ENCODE measurements at regions of chr9 and their contacts with region 1.

Region 1: DNA sequence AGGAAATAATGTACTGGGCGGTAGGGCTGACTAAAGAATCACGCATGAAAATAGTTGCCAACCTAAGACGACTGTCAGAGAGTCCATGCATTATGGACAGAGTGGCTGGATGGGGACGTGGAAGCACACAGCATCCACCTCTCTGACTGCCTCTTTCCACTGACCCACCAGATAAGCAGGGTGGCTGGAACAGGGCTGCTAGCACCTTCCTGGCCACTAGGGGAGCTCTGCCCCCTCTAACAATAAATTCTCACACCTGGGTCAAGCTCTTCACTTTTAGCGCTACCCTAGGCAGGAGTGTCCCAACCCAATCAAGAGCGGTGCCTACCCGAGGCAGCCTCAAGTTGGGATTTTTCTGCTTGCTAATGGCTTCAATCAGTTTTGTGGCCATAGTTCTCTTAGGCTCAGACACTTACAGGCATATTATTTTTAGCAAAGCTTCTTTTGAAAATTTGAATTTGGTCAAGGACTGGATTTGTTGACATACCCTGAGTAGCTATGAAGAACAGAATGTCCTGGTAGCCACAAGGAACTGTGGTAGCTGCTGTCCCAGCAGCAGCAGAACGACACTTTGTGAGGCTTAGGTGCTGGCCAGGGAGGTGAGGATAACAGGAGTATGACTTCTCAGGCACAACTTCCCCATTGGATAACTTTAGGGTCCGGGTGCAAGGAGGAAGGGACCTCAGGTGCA is 6.9 kb upstream of the TPM2 start:
- DNase-seq: peak; percentile 50
- ATAC-seq: peak; percentile 98
- H3K4me3 Mint-ChIP-seq: no peak overlapping the region
- H3K27ac Mint-ChIP-seq: peak overlapping the region; percentile 76
- H3K4me1 Mint-ChIP-seq: peaks cover 9% of the 10 kb centered on the region
- H3K27me3 Mint-ChIP-seq: no peaks in the 10 kb centered on the region
- CTCF ChIP-seq: no peak

Region 2: GRCh38 chr9:35611230-35611797 is 85.4 kb before region 1 on chr9:
- CTCF ChIA-PET with region 1: interaction called, 41 read pairs
- POLR2A ChIA-PET with region 1: interaction called, 9 read pairs
- intact Hi-C with region 1: no loop called
- DNase-seq: no peak
- ATAC-seq: peak; percentile 94
- H3K4me3 Mint-ChIP-seq: no peak overlapping the region
- H3K27ac Mint-ChIP-seq: peak overlapping the region; percentile 54
- H3K4me1 Mint-ChIP-seq: peaks cover 66% of the 10 kb centered on the region
- H3K27me3 Mint-ChIP-seq: no peaks in the 10 kb centered on the region
- CTCF ChIP-seq: no peak

Region 3: DNA sequence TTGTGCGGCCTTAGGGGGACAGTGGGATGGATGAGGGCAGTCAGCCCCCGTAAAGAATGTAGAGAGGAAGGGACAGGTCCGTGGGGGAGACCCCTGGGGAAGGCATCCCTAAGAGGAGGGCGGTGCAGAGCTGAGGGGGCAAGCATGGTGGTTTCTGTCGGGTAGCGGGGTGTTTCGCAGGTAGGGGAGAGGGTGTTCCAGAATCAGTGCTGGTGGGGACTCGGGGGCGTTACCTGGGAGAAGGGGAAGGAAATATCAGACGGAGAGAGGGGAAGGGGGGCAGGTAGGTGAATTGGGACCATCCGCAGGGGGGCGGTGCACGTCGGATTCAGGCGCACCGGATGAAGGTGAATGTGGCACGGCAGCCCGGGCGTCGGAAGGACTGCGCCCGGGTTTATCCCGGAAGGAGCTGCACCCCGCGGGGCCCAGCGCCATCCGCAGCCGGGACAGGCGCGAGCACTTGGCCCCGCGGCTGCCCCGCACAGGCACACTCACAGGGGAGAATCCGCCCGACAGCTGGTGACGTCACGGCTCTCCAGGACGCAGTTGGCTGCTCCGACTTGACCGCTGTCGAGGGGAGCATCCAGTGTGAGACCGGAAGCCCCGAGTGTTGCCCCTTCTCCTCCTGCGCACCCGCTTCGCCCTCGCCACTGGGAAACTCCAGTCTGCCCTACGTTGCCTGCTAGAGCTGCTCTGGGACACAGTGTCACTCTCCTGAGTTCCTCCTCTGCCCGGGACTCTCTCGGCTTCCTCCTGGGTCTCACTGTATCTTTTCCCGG is 79.8 kb before region 1 on chr9:
- CTCF ChIA-PET with region 1: interaction called, 35 read pairs
- POLR2A ChIA-PET with region 1: interaction called, 7 read pairs
- intact Hi-C with region 1: loop called (anchors 1 kb)
- DNase-seq: peak; percentile 64
- ATAC-seq: peak; percentile 8
- H3K4me3 Mint-ChIP-seq: peak overlapping the region; percentile 87
- H3K27ac Mint-ChIP-seq: peak overlapping the region; percentile 97
- H3K4me1 Mint-ChIP-seq: peaks cover 98% of the 10 kb centered on the region
- H3K27me3 Mint-ChIP-seq: no peaks in the 10 kb centered on the region
- CTCF ChIP-seq: no peak

Region 4: GRCh38 chr9:35664531-35665470 is 31.9 kb before region 1 on chr9 and contains the start of gene ARHGEF39:
- CTCF ChIA-PET with region 1: interaction called, 32 read pairs
- POLR2A ChIA-PET with region 1: interaction called, 24 read pairs
- intact Hi-C with region 1: no loop called
- DNase-seq: peak; percentile 60
- ATAC-seq: peak; percentile 71
- H3K4me3 Mint-ChIP-seq: peak within 1 kb of the TSS; percentile 83
- H3K27ac Mint-ChIP-seq: peak within 1 kb of the TSS; percentile 25
- H3K4me1 Mint-ChIP-seq: peaks cover 54% of the 10 kb centered on the region
- H3K27me3 Mint-ChIP-seq: no peaks in the 10 kb centered on the region
- CTCF ChIP-seq: no peak
- total RNA-seq, gene ARHGEF39: 0.59 and 0.89 TPM in 2 replicates

Region 5: GRCh38 chr9:35675732-35676392 is 20.8 kb before region 1 on chr9:
- CTCF ChIA-PET with region 1: interaction called, 30 read pairs
- POLR2A ChIA-PET with region 1: no interaction called
- intact Hi-C with region 1: no loop called
- DNase-seq: peak; percentile 47
- ATAC-seq: peak; percentile 74
- H3K4me3 Mint-ChIP-seq: peak overlapping the region; percentile 75
- H3K27ac Mint-ChIP-seq: no peak overlapping the region
- H3K4me1 Mint-ChIP-seq: peaks cover 31% of the 10 kb centered on the region
- H3K27me3 Mint-ChIP-seq: peaks cover 8% of the 10 kb centered on the region
- CTCF ChIP-seq: no peak

Region 6: GRCh38 chr9:35716230-35716629 is 19.6 kb after region 1 on chr9:
- CTCF ChIA-PET with region 1: interaction called, 19 read pairs
- POLR2A ChIA-PET with region 1: interaction called, 4 read pairs
- intact Hi-C with region 1: no loop called
- DNase-seq: no peak
- ATAC-seq: no peak
- H3K4me3 Mint-ChIP-seq: no peak overlapping the region
- H3K27ac Mint-ChIP-seq: no peak overlapping the region
- H3K4me1 Mint-ChIP-seq: peaks cover 26% of the 10 kb centered on the region
- H3K27me3 Mint-ChIP-seq: no peaks in the 10 kb centered on the region
- CTCF ChIP-seq: no peak

Region 7: DNA sequence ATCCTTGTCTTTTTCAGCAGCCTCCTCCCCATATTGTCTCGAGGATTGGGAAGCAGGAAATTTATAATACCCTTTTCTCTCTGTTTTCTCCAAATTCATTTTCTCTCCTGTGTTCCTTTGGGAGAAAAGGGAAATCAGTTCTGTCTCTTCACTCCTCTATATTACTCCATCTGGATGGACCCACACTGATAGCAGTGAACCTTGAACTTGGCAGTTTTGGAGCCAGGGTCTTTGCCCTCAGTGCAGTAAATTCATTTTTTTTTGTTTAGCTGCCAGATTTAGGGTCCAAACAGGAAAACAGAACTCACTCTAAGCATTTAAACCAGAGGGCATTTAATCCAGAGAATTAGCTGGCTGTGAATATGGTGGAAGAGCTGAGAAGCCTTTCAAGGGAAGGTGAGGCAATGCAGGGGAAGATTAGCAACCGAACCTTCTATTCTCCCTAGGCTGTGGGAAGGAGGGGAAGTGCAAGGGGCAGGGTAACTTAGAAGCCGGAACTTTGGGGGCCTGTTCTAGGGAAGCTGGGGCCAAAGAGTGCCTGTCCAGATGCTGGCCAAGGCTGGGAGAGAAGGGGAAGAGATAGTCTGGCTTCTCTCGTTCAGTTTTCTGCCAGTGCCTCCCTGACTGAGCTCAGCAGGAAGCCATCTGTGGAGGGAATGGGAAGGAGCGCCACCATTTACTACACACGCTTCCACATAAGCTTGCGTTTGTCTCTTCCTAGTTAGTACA is 78.4 kb after region 1 on chr9:
- CTCF ChIA-PET with region 1: no interaction called
- POLR2A ChIA-PET with region 1: no interaction called
- intact Hi-C with region 1: no loop called
- DNase-seq: no peak
- ATAC-seq: no peak
- H3K4me3 Mint-ChIP-seq: no peak overlapping the region
- H3K27ac Mint-ChIP-seq: peak overlapping the region; percentile 53
- H3K4me1 Mint-ChIP-seq: peaks cover 17% of the 10 kb centered on the region
- H3K27me3 Mint-ChIP-seq: no peaks in the 10 kb centered on the region
- CTCF ChIP-seq: no peak

Measured in activated B cell treated with CpG ODN at 0.5 μM for 24 hours (primary cell).